A549 (cell line): ENCODE measurements at regions of chr16 and their contacts with region 1.

Region 1: GRCh38 chr16:31700526-31701388 is 172.8 kb upstream of the ZNF267 start:
- DNase-seq: peak in 1 of 2 experiments; percentile 79
- ATAC-seq: peak in 1 of 2 experiments; percentile 99; a peak in 5 of 6 replicates
- H3K4me3 ChIP-seq: peak overlapping the region; percentile 94
- H3K27ac ChIP-seq: peak overlapping the region; percentile 74 to 90
- H3K4me1 ChIP-seq: peaks cover 5% of the 10 kb centered on the region; the same call in 2 of the 3 replicates
- CTCF ChIP-seq: no peak; the same call in 2 of the 3 replicates
- EP300 ChIP-seq: no peak
- POLR2A ChIP-seq: peak; percentile 41; the same call in 1 of the 2 replicates
- RAD21 ChIP-seq: no peak

Region 2: DNA sequence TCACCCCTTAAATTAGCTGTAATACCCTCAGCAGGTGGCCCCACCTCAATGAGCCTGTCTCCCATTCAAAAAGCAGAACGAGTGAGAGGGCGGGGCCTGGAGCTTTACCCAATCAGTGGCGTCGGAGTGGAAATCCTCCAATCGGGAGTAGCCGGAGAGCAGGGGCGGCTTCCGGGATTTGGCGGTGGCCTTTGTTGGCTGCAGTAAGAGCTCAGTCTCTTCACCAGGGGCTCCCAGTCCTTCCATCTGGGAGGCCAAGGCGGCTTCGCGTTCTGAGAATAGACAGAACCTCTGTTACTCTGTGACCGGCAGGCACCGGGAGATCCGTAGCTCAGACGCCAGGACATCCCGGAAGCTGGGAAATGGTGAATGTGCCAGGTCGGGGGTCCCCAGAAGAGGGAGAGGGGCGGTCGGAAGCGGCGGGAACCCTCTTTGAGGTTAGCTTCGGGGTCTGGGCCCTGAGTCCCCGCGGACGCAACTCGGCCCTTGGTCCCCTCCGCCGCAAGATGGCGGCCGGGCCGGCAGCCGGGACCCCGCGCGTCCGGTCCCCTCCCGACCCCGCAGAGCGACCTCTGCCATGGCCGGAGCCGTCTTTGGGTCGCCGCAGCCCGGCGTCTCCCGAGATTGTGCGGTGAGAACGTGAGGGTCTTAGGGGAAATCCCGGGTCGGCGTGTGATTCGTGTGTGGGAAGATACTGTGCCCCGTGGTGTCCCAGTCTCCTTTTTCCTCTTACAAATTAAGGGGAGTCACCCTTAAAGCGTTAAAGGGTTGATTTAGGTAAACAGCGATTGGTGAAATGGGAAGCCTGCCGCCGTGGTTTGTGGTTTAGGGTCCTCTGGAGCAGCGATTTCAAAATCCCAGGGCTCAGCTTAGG is 12.6 kb after region 1 on chr16:
- CTCF ChIA-PET with region 1: interaction called, 12 read pairs
- POLR2A ChIA-PET with region 1: interaction called, 5 read pairs
- DNase-seq: peak; percentile 93
- ATAC-seq: peak; percentile 92 to 98
- H3K4me3 ChIP-seq: peak overlapping the region; percentile 82
- H3K27ac ChIP-seq: peak overlapping the region; percentile 90 to 96
- H3K4me1 ChIP-seq: 0 out of 3 replicates have a peak, but pooled peaks cover 6% of the 10 kb centered on the region
- CTCF ChIP-seq: no peak
- EP300 ChIP-seq: no peak
- POLR2A ChIP-seq: peak; percentile 95
- RAD21 ChIP-seq: no peak